Activated T-helper 2 cell treated with anti-CD3 and anti-CD28 coated beads, Interferon-gamma antibody, Interleukin-2, Interleukin-4, amounts not matched to agents 10 μg/mL and 5 μg/mL and 100 μg/mL, durations not matched to agents 14 hours and 24 hours and 36 hours (primary cell): ENCODE measurements at regions of chr1 and their contacts with region 1.

Region 1: DNA sequence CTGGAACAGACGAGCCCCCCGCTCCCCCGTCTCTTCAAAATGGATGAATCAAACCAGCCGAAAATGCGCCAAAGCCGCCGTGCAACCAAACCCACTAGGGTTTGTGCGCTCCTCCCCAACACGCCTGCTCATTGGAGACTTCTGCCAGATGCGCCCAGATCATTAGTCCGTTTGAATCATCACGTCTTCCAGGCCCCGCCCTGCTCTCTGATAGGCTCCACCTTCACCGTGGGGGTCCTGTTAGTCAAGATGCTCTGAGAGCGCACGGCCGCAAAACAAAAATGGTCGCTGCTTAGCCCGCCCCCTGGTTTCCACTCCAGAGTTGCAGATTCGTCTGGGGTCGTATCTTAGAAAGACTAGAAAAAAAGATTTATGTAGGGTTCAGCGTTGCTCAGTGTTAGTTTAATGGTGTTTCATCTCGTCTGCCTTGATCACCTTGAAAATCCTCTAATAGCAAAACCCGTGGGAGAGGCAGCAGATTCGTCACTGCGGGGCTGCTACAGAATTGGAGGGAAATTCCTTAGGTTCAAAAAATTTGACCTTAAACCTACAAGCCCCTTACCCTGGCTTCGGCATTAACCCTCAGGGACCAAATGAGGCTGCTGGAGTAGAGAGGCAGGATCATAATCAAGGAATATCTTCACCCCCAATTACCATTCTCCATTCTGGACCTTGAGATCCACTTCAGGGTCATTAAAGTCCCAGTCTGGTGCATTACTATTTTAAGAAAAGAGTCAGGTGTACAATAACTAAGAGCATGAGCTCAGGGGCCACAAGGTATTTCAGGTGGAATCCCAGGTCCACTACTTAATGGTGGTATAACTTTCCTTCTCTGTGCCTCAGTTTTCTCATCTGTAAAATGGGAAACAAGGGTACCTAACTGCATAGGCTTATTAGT is at the start of gene NUCKS1:
- DNase-seq: peak; percentile 96
- H3K4me3 Mint-ChIP-seq: peak within 1 kb of the TSS; percentile 99
- H3K27ac Mint-ChIP-seq: peak within 1 kb of the TSS; percentile 98
- H3K4me1 Mint-ChIP-seq: peaks cover 35% of the 10 kb centered on the region
- H3K27me3 Mint-ChIP-seq: peaks cover 3% of the 10 kb centered on the region
- total RNA-seq, gene NUCKS1: 176 and 180 TPM in 2 replicates

Region 2: DNA sequence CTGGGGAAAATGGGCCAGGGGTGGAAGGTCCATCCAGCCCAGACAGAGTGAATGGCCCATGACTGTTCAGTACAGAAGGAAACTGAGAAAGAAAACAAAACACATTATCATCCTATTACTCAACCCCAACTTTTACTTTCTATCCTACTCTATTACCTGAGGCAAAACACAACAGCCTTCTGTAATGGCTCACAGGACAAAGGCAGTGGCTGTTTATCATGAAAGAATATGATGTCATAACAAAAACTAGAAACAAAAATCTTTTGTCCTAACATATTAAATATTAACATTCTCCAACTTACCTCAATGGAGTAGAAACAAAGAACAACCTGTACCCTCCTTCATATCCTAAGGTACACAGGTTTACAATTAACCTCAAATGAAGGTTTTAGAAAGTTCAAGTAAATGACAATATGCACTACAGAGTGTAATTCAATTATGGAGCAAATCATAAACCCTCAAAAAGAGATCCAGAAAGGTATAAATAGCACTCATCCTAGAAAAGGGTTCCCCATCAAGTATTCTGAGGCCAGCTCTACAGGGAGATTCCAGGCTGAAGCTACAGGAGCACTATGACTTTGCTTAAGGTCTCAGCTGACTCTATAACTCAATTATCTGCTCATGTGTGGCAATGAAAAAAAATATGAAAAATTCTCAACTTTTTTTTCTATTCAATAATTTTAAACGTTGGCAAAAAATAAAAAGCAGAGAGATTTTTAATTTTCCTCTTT is 133.7 kb before region 1 on chr1:
- intact Hi-C with region 1: no loop called
- DNase-seq: no peak
- H3K4me3 Mint-ChIP-seq: no peak overlapping the region
- H3K27ac Mint-ChIP-seq: peak overlapping the region; percentile 42
- H3K4me1 Mint-ChIP-seq: peaks cover 23% of the 10 kb centered on the region
- H3K27me3 Mint-ChIP-seq: no peaks in the 10 kb centered on the region

Region 3: DNA sequence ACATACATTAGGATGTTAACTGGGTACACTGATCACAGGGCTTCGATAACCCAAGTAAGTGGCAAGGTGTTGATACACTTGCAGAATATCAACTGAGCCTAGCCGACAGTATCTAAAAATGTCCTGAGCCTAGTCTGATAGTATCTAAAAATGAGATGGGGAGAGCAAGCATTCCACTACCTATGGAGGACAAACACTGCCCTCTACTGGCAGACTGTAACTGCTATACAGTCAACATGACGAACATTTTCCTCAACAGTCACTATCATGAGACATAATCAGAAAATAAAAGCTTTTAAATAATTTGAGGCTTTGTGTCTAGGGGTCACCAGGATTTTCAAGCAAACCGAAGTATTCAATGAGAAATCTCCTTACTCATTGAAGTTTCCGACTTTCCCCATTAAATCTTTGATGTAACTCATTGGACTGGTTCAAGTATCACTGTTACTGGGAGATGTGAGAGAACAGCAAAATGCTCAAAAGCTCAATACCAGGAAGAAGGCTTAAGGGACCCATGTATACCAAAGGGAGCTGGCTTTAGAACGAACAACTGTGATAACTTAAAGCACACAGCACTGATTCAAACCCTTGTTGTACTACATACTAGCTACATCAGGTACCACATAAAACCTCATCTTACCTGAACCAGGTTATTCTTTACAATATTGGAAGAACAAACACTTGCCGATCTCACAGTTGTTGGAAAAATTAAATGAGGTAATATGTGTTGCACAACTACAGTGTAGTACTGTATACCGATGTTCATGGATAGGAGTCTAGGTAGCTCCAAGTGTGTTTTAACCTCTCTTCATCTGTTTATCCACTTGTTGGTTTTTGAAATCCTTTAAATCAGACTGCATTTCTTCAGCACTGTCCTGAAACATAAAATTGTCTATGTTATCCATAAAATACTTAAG is 39.0 kb before region 1 on chr1:
- intact Hi-C with region 1: loop called (anchors 2 kb)
- DNase-seq: peak; percentile 48
- H3K4me3 Mint-ChIP-seq: no peak overlapping the region
- H3K27ac Mint-ChIP-seq: peak overlapping the region; percentile 77
- H3K4me1 Mint-ChIP-seq: peaks cover 19% of the 10 kb centered on the region
- H3K27me3 Mint-ChIP-seq: no peaks in the 10 kb centered on the region

Region 4: GRCh38 chr1:205719762-205720161 is 30.6 kb before region 1 on chr1:
- intact Hi-C with region 1: loop called (anchors 2 kb)
- DNase-seq: no peak
- H3K4me3 Mint-ChIP-seq: peak overlapping the region; percentile 3
- H3K27ac Mint-ChIP-seq: peak overlapping the region; percentile 89
- H3K4me1 Mint-ChIP-seq: peaks cover 32% of the 10 kb centered on the region
- H3K27me3 Mint-ChIP-seq: no peaks in the 10 kb centered on the region

Region 5: DNA sequence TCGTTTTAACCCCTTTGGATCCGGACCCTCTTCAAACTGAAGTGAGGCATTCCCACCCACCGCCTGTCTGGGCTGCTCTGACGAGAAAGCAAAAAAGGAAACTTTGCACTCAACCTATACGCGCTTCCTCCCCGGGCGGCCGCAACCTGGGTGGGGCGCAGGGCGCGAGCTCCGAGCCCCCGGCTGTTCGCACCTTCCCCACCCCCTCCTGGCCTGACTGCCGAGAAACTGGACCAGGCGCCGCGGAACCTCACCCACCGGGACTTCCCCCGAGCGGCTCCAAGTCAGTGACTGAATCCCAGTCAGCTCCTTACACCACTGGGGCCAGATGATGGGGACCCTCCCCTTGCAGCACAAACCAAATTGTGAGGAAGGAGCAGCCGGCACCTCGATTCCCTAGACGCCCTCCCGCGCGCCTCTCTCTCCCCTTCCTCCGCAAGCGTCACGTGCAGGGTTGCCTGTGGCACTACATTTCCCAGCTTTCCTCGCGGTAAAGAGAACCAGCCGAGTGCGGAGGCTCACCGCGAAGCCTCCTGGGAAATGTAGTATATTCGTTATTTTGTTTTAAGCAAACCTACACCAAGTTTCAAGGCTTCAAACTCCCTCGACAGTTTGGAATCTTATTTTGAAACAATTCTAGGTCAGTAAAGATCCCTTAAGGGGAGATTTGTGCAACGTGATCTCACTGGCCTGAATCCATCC is 24.8 kb after region 1 on chr1 and contains the start of gene RAB29:
- intact Hi-C with region 1: loop called (anchors 1 kb)
- DNase-seq: peak; percentile 81
- H3K4me3 Mint-ChIP-seq: peak within 1 kb of the TSS; percentile 96
- H3K27ac Mint-ChIP-seq: peak within 1 kb of the TSS; percentile 93
- H3K4me1 Mint-ChIP-seq: peaks cover 51% of the 10 kb centered on the region
- H3K27me3 Mint-ChIP-seq: peaks cover 4% of the 10 kb centered on the region
- total RNA-seq, gene RAB29: 26.2 and 26.7 TPM in 2 replicates

Region 6: DNA sequence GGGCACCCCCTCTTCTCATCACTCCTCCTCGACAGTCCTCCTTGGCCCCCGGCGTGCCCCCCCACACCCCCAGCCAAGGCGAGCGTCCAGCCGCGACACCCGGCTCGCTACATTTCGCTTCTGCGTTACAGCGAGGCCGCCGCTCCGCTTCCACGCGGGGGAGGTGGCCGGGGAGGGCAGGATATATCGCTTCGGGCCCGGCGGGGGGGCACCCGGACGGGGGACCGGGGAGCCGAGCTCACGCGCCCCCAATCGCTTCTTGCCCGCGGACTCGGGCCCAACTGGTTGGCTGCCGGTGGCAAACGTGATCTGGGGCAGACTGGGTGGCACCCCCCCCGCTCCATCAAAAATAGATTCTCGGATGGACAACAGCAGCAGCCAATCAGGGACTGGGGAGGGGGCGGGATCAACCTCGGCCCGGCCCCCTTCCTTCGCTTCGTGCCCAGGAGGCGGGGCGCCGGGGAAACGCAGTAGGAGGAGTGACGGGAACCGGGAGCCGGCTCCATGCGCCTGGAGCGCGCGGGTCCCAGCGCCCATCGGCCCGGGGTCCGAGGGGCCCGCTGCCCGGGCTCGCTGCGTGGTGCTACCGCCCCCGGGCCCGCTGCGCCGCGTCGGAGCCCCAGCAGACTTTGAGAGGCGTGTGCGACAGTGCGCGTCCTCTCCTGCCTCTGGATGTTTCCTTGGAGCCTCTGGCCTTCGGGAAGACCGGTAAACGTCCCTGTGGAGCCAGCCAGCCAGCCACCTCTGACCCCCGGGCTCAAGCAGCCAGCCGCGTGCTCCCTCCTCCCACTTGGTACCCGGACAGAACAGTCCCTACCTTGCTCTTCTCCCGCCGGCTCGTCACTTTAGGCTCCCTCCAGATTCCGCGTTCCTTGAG is 62.7 kb after region 1 on chr1 and contains the start of gene SLC41A1:
- intact Hi-C with region 1: loop called (anchors 2 kb)
- DNase-seq: peak; percentile 83
- H3K4me3 Mint-ChIP-seq: peak within 1 kb of the TSS; percentile 93
- H3K27ac Mint-ChIP-seq: peak within 1 kb of the TSS; percentile 86
- H3K4me1 Mint-ChIP-seq: peaks cover 45% of the 10 kb centered on the region
- H3K27me3 Mint-ChIP-seq: no peaks in the 10 kb centered on the region
- total RNA-seq, gene SLC41A1: 46.9 and 48.5 TPM in 2 replicates

Region 7: GRCh38 chr1:205977402-205978014 is 227.1 kb after region 1 on chr1:
- intact Hi-C with region 1: no loop called
- DNase-seq: peak; percentile 56
- H3K4me3 Mint-ChIP-seq: no peak overlapping the region
- H3K27ac Mint-ChIP-seq: no peak overlapping the region
- H3K4me1 Mint-ChIP-seq: no peaks in the 10 kb centered on the region
- H3K27me3 Mint-ChIP-seq: peaks cover 3% of the 10 kb centered on the region

Region 8: DNA sequence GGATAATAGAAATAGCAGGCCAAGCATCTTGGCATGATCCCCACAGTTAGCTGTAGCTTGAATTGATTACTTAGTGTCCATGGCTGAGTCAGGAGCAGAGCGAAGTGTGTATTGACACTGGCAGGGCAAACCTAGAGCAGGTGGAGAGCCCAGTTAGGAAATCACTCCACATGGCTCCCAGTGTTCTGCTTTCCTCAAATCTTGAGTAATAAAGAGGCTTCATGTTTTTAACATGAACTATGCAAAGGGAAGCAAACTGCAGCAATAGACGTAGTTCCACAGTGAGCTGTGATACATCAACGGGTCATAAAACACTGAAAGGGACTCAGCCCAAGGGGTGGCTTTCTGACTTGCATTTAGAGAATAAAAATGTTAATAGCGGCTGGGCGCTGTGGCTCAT is 331.5 kb after region 1 on chr1:
- intact Hi-C with region 1: no loop called
- DNase-seq: no peak
- H3K4me3 Mint-ChIP-seq: no peak overlapping the region
- H3K27ac Mint-ChIP-seq: no peak overlapping the region
- H3K4me1 Mint-ChIP-seq: peaks cover 17% of the 10 kb centered on the region
- H3K27me3 Mint-ChIP-seq: peaks cover 58% of the 10 kb centered on the region